Heart right ventricle (tissue), 16 donors: ENCODE measurements at regions of chr14 and their contacts with region 1.

Region 1: DNA sequence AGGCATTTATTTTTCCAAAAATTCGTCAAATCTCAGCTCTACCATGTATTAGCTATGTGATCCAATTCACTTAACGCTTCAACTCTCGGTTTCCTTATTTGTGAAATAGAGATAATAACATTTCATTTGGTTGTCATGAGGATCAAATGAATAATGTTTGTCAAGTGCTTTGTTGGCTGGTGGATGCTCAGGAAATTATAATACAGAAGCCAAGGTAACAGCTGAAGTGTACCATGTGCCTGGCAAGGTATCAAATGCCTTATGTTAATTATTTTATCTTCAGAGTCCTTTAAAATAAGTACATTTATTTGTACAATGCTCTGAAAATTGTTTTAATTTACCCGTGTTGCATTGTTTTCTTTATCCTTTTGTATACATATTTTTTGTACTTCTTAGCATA is 6.1 kb upstream of the PRKCH start:
- DNase-seq: no peak
- ATAC-seq: no peak
- H3K4me3 ChIP-seq: no peak overlapping the region
- H3K27ac ChIP-seq: no peak overlapping the region
- H3K4me1 ChIP-seq: no peaks in the 10 kb centered on the region
- H3K27me3 ChIP-seq: peaks cover 0 to 5% (median 0%) of the 10 kb centered on the region in 7 donors
- CTCF ChIP-seq: no peak

Region 2: DNA sequence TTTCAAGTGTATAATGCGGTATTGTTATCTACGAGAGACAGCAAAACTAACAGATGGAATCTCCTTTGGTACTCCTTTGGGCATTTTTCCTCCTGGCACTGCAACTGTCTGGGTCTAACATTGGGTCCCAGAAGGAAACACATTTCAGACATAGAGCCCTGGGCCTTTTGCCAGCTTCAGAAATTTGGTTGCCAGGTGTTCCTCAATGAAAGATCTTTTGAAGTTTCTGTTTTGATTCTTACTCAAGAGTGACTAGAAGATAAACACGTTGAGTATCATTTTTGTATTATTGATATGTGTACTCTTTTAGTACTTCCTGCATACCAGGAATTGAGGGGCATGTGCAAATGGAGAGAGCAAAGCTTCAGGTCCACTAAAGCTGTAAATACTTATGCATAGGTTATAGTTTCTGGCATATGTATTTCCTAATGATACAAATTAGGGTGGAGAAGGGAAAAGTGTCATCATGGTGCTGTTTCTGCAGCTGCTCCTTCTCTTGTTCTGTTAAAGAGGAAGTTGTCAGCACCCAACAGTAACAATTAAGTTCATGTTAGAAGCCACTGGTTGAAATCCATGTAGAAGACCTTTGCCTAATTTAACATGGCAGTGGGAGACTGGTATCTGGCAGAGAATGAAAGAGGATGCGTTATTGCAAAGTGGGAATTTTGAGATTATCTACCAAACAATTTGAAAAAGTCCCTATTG is 280.7 kb before region 1 on chr14:
- intact Hi-C with region 1: no loop called
- DNase-seq: no peak
- ATAC-seq: no peak
- H3K4me3 ChIP-seq: no peak overlapping the region
- H3K27ac ChIP-seq: no peak overlapping the region
- H3K4me1 ChIP-seq: peaks cover 0 to 13% (median 0%) of the 10 kb centered on the region in 9 donors
- H3K27me3 ChIP-seq: no peaks in the 10 kb centered on the region
- CTCF ChIP-seq: no peak

Region 3: DNA sequence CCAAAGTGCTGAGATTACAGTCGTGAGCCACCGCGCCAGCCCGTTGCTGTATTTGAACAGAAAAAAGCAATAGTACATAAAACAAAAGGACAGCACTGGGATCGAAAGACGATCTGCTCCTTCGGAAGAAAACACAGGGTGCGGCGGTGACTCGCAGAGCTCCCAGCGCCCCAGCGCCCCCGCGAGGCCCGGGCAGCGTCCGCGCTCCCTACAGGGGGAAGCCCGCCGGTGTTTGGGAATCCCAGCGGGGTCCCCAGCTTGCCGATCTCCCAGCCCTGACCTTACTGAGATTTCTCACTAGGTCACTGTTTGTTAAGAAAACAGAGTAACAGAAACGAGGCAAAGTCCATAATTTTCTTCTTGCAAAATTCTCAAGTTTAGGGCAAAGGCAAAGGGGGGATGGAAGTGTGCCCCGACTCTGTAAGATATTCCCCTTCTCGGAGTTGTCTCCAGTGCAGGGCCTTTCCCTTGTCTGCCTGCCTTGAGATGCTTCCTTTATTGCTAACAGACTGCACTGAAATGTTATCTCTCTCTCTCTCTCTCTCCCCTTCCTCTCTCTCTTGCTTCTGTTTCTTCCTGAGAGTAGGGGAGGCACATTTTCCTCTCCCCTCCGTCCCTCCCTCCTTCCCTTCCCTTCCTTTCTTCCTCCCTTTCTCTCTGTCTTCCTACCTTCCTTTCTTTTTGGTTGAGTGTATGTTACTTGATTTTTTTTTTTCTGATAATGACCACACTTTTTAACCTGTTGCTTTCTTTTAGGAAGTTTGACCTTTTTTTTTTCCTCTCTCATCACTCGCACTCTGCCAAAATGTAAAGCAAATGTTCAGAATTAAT is 126.1 kb before region 1 on chr14:
- intact Hi-C with region 1: no loop called
- DNase-seq: peak; percentile 34 to 57
- ATAC-seq: peak; percentile 80 to 90 (median 84)
- H3K4me3 ChIP-seq: peak overlapping the region in 9 of 10 donors; percentile 22 to 55 (median 48)
- H3K27ac ChIP-seq: peak overlapping the region in 9 of 10 donors; percentile 8 to 78 (median 52)
- H3K4me1 ChIP-seq: peaks cover 0 to 23% (median 0%) of the 10 kb centered on the region in 9 donors
- H3K27me3 ChIP-seq: peaks cover 0 to 68% (median 23%) of the 10 kb centered on the region in 7 donors
- CTCF ChIP-seq: peak in 8 of 9 donors; percentile 17 to 65 (median 53)

Region 4: GRCh38 chr14:61456720-61457119 is 141.4 kb after region 1 on chr14:
- intact Hi-C with region 1: loop called in 5 of 10 experiments (anchors 5 to 10 kb)
- DNase-seq: peak; percentile 58 to 91
- ATAC-seq: peak; percentile 61 to 82 (median 76)
- H3K4me3 ChIP-seq: no peak overlapping the region
- H3K27ac ChIP-seq: no peak overlapping the region
- H3K4me1 ChIP-seq: peaks cover 0 to 53% (median 27%) of the 10 kb centered on the region in 9 donors
- H3K27me3 ChIP-seq: no peaks in the 10 kb centered on the region
- CTCF ChIP-seq: peak; percentile 70 to 93 (median 90)